Lower leg skin (tissue), 4 donors: ENCODE measurements at regions of chr1 and their contacts with region 1.

Region 1: GRCh38 chr1:181166377-181167196 is 78.1 kb downstream of the IER5 start:
- DNase-seq: peak in 1 of 2 donors; percentile 65
- H3K4me3 ChIP-seq: no peak overlapping the region
- CTCF ChIP-seq: peak in 1 of 3 donors; percentile 57
- POLR2A ChIP-seq: no peak

Region 2: DNA sequence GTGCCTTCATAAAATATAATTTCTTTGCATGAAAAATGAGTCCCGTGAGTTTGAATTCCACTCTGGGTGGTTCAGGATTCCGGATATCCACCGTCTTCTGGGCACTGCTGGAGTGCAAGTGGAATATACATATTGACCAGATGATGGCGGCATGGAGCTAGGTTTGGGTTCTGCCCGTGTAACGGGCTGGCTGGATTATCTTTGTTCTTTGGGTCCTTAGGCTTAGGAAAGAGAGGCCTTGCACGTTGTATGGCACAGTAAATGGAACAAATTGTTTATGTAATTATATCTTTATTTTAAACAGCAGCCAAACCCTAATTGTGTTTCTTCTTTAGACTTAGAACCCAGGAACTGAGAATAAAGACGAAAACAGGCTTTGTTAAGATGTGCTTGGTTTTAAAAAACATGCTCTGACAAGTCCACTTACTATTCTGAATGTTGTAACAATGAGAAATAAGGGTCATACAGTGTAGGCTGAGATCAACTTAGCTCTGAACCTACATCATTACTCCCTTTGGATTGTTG is 650.7 kb before region 1 on chr1:
- intact Hi-C with region 1: loop called (anchors 10 kb)
- DNase-seq: peak in 1 of 2 donors; percentile 48
- H3K4me3 ChIP-seq: no peak overlapping the region
- CTCF ChIP-seq: peak in 1 of 3 donors; percentile 27
- POLR2A ChIP-seq: no peak

Region 3: DNA sequence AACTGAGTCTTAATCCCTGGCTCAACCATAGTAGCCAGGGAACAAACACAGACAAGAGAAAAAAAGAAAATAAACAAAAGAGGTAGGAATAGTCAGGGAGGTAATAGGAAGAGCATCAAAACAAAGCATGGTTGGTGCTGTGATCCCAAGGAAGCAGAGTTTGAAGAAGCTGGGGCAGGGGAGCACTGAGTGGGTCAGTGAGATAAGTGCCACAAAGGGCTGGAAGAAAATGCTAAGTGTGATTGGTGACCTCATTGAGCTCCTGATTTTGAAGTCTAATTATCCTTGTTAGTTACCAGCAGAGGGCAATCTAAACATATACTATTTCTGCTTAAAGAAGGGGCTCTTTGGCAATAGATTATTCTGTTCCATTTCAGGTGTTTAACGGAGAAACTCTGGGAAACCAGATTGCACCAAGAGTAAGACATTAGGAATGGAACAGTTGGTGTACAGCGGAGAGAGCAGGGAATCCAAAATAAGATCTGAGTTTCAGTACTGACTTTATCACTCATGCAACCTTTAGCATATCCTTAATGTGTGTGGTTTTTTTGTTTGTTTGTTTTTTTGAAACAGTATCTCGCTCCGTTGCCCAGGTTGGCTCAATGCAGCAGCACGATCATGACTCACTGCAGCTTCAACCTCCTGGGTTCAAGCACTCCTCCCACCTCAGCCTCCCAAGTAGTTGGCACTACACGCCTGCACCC is 284.6 kb before region 1 on chr1:
- intact Hi-C with region 1: loop called (anchors 5 kb)
- DNase-seq: no peak
- H3K4me3 ChIP-seq: no peak overlapping the region
- CTCF ChIP-seq: no peak
- POLR2A ChIP-seq: no peak